Mammary epithelial cell (primary cell): ENCODE measurements at regions of chr3 and their contacts with region 1.

Region 1: GRCh38 chr3:43531835-43532234 is 90.0 kb downstream of the ANO10 start:
- DNase-seq: peak; percentile 86
- H3K4me3 ChIP-seq: no peak overlapping the region
- H3K27ac ChIP-seq: no peak overlapping the region
- H3K4me1 ChIP-seq: no peaks in the 10 kb centered on the region
- H3K27me3 ChIP-seq: no peaks in the 10 kb centered on the region
- CTCF ChIP-seq: no peak

Region 2: DNA sequence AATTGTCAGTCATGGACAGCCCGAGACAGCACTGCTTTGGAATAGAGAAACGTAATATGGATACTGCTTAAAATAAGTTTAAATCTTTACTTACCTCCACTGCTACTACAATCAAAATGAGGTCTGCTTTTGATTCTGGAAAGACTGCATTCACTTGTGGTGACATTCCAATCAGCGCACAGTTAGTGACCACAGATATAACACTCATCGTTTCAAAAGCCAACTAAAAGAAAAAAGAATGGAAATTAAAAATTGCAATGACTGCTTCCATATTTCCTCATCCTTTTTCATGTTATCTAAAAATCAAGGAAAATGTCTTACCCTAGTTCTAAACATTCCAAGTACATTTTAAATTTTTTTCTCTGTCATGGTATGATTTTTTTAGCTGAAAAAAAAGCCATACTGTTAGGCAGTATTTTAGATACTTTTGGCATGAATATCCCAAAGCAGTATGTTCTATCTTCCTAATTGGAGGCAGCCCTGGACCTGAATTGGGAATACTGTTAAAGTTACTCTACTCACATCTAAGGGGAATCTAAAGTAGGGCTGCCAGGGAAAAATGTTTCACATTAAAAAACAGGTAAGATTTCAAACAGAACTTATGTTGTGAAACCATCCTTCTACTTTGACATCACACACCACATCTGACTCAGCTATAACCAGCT is 17.9 kb after region 1 on chr3:
- CTCF ChIA-PET with region 1: no interaction called
- dilution Hi-C with region 1: no loop called
- in situ Hi-C with region 1: no loop called
- intact Hi-C with region 1: loop called (anchors 1 kb)
- DNase-seq: no peak
- H3K4me3 ChIP-seq: no peak overlapping the region
- H3K27ac ChIP-seq: no peak overlapping the region
- H3K4me1 ChIP-seq: no peaks in the 10 kb centered on the region
- H3K27me3 ChIP-seq: no peaks in the 10 kb centered on the region
- CTCF ChIP-seq: no peak

Region 3: DNA sequence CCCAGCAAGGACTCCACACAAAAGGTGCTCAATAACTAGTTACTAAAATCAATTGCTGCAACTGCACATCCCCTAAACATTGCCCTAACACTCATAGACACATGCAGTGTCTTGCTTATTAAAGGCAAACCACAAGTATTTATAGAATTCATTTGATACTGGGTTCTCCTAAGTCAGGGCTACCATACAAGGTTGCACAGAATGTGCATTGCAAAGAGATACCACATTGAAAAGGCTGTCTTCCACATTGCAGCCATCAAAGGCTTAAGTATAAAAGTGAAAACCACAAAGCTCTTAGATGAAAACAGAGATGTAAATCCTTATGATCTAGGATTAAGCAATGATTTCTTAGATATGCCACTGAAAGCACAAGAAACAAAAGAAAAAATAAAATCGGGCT is 676.3 kb after region 1 on chr3:
- CTCF ChIA-PET with region 1: no interaction called
- dilution Hi-C with region 1: no loop called
- in situ Hi-C with region 1: loop called in 1 of 2 experiments (anchors 25 kb)
- intact Hi-C with region 1: no loop called
- DNase-seq: peak; percentile 50
- H3K4me3 ChIP-seq: no peak overlapping the region
- H3K27ac ChIP-seq: no peak overlapping the region
- H3K4me1 ChIP-seq: peaks cover 17% of the 10 kb centered on the region
- H3K27me3 ChIP-seq: no peaks in the 10 kb centered on the region
- CTCF ChIP-seq: no peak